Common myeloid progenitor, CD34-positive (primary cell): ENCODE measurements at regions of chr17 and their contacts with region 1.

Region 1: GRCh38 chr17:59440784-59441441 is 109.5 kb downstream of the YPEL2 start:
- DNase-seq: peak; percentile 90 to 95 (median 91)
- H3K4me3 ChIP-seq: no peak overlapping the region
- H3K27ac ChIP-seq: no peak overlapping the region
- H3K4me1 ChIP-seq: peaks cover 7 to 36% (median 27%) of the 10 kb centered on the region in 4 experiments
- H3K27me3 ChIP-seq: no peaks in the 10 kb centered on the region

Region 2: DNA sequence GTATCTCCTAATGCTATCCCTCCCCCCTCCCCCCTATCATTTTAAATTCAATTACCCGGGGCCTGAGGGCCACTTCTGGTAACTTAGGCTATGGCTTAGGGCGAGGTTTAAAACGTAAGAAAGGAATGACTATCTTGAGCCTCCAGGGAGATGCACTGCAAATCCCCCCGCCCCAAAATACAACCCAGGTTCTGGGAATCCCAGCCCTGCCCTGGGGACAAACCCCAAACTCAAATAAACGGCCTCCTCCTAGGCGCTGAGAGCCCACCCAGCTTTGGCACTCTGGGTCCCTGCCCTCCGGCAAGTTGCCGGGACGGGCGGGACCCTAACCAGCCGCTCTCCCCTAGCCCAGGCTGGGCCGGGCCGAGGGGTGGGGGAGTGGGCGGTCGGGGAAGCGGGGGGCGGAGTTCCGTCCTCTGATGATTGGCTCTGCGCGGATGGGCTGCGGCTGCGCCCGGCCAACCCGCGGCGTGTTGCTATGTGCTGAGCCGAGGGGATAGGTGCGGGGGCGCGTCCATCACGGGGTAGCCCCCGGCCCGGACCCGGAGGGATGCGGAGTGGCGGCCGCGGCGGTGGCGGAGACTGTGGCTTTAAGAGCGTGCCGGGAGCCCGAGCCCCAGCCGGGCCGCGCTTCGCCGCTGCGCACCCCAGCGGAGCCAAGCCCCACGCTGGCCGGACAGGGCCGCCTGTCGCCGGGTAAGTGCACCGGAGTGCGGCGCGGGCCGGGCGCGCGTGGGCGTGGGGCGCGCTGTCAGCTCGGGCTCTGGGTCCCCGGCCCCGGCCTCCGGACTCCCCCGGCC is 109.6 kb before region 1 on chr17 and contains the start of gene YPEL2:
- CTCF ChIA-PET with region 1: interaction called, 68 read pairs
- POLR2A ChIA-PET with region 1: interaction called, 5 read pairs
- DNase-seq: peak; percentile 92 to 96 (median 96)
- H3K4me3 ChIP-seq: peak within 1 kb of the TSS; percentile 76 to 92 (median 84)
- H3K27ac ChIP-seq: peak within 1 kb of the TSS in 1 of 2 experiments; percentile 77
- H3K4me1 ChIP-seq: peaks cover 12 to 37% (median 31%) of the 10 kb centered on the region in 4 experiments
- H3K27me3 ChIP-seq: no peaks in the 10 kb centered on the region

Region 3: GRCh38 chr17:59451706-59452105 is 10.8 kb after region 1 on chr17:
- CTCF ChIA-PET with region 1: interaction called, 20 read pairs
- POLR2A ChIA-PET with region 1: no interaction called
- DNase-seq: no peak
- H3K4me3 ChIP-seq: no peak overlapping the region
- H3K27ac ChIP-seq: no peak overlapping the region
- H3K4me1 ChIP-seq: no peaks in the 10 kb centered on the region
- H3K27me3 ChIP-seq: no peaks in the 10 kb centered on the region

Region 4: DNA sequence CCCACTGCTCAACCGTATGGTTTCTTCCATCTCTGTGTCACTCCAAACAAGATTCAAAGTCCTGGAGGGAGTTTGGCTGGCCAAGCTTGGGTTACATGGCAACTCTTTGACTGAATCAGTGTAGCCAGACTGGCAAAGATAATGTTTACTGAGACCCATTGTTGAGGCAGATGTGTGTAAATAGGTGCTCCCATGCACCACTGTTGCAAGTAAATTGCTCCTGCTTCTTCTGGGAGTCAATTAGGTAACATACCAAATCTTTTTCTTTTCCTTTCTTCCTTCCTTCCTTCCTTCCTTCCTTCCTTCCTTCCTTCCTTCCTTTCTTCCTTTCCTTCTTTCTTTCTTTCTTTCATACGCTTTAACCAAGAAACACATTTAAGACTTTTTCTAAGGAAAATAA is 38.2 kb after region 1 on chr17:
- CTCF ChIA-PET with region 1: no interaction called
- POLR2A ChIA-PET with region 1: no interaction called
- DNase-seq: no peak
- H3K4me3 ChIP-seq: no peak overlapping the region
- H3K27ac ChIP-seq: no peak overlapping the region
- H3K4me1 ChIP-seq: no peaks in the 10 kb centered on the region
- H3K27me3 ChIP-seq: no peaks in the 10 kb centered on the region